Spleen (tissue), 13 donors: ENCODE measurements at regions of chr7 and their contacts with region 1.

Region 1: DNA sequence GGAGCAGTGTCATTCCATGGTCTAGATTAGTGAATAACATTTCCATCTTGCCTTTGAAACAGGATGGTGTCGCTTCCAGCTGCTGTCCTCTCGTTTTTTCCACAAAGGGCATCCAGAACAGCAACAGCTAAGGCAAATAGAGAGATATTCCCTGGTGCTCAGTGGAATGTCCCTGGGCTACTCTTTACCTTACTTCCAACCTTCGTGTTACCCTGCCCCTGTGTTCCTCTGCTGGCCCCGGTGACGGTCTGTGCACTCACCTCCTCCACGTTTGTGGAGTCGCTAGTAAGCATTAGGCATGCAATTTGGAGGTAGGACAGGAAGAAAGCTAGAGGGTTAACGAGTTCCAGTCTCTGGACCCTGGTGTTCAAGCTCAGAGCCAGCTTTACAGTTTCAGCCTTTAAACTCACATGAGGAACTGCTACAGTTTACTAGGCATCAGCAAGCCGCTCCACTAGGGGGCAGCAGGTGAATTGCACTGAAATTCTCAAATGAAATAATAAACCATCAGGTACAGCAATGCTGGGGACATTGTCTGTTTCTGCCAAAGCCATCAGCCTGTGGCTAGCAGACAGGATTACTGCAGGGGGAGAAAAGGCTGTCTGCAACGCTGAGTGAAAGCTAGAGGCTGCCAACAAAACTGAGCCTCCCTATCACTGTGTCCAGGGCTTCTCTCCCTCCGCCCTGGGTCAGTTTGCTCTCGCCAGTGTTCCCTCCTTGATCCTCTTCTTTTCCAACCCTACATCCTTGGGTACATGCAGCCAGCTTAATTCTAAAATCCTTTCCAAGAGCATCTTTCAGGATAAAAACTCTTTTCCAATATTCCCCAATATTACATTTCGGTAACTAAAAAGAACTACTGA is 9.0 kb downstream of the MRPL32 start:
- DNase-seq: peak; percentile 88
- H3K4me3 ChIP-seq: no peak overlapping the region
- H3K27ac ChIP-seq: no peak overlapping the region
- H3K4me1 ChIP-seq: peaks cover 0 to 17% (median 2%) of the 10 kb centered on the region in 6 donors
- H3K27me3 ChIP-seq: no peaks in the 10 kb centered on the region
- CTCF ChIP-seq: peak; percentile 53 to 89 (median 77)
- POLR2A ChIP-seq: no peak

Region 2: GRCh38 chr7:42590771-42591310 is 350.4 kb before region 1 on chr7:
- intact Hi-C with region 1: no loop called
- DNase-seq: no peak
- H3K4me3 ChIP-seq: no peak overlapping the region
- H3K27ac ChIP-seq: no peak overlapping the region
- H3K4me1 ChIP-seq: no peaks in the 10 kb centered on the region
- H3K27me3 ChIP-seq: no peaks in the 10 kb centered on the region
- CTCF ChIP-seq: no peak
- POLR2A ChIP-seq: no peak

Region 3: DNA sequence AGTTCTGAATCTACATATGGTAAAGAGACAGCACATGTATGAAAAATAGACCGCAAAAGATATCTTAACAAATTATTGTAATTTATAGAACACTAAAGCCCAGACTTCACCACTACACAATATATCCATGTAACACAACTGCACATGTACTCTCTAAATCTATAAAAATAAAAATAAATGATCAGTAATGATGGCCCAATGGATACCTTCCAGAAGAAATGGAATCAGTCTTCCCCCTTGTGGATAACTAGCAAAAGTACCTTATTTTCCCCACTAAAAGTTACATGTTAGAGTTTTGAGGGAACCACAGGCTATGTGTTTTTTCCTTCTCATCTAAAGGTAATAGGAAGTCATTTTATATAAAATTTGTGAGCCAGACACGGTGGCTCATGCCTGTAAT is 55.1 kb before region 1 on chr7:
- intact Hi-C with region 1: no loop called
- DNase-seq: no peak
- H3K4me3 ChIP-seq: no peak overlapping the region
- H3K27ac ChIP-seq: peak overlapping the region in 1 of 8 donors; percentile 91
- H3K4me1 ChIP-seq: peaks cover 0 to 50% (median 31%) of the 10 kb centered on the region in 6 donors
- H3K27me3 ChIP-seq: peaks cover 0 to 9% (median 0%) of the 10 kb centered on the region in 7 donors
- CTCF ChIP-seq: peak in 3 of 11 experiments; percentile 6 to 22 (median 19)
- POLR2A ChIP-seq: no peak

Region 4: DNA sequence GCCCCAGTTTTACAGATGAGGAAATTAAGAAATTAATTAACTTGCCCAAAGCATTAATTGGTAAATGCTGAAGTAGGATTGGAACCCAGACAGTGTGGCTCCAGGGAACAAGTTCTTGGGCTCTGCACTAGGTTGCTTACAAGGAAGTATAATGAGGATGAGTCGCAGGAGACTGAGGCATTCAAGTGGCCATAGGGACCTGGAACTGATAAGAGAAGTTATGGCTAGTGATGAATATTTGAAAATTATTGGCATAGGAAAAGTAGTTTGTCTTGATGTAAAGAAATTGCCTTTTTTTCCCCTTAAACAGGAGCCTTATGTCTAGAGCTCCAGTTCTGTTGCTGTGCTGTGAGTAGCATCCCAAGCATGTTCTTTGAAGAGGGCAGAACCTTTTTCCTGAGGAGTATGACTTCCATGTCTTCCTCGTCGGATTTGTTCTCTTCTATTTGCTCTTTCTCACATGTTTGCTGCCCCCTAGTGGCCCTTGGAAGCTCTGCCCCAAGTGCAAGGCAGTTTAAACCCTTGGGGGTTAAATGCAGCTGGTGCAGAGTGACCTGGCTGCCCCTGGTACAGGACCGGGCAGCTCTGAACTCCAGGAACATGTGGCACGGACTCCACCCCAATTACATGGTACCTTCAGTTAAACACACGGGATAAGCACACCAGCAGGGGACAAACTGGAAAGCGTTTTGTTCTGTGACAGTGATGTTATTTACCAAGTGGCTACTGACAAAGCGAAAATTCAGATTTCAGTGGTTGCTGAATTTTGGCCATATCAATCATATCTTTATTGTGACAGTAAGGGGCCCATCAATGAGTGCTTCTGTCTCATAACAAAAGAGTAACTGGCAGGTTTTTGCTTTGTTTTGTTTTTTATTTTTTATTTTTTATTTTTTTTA is 320.0 kb after region 1 on chr7:
- intact Hi-C with region 1: loop called (anchors 5 kb)
- DNase-seq: peak; percentile 83
- H3K4me3 ChIP-seq: no peak overlapping the region
- H3K27ac ChIP-seq: no peak overlapping the region
- H3K4me1 ChIP-seq: peaks cover 0 to 7% (median 0%) of the 10 kb centered on the region in 6 donors
- H3K27me3 ChIP-seq: peaks cover 0 to 17% (median 0%) of the 10 kb centered on the region in 7 donors
- CTCF ChIP-seq: peak; percentile 66 to 93 (median 82)
- POLR2A ChIP-seq: no peak

Region 5: DNA sequence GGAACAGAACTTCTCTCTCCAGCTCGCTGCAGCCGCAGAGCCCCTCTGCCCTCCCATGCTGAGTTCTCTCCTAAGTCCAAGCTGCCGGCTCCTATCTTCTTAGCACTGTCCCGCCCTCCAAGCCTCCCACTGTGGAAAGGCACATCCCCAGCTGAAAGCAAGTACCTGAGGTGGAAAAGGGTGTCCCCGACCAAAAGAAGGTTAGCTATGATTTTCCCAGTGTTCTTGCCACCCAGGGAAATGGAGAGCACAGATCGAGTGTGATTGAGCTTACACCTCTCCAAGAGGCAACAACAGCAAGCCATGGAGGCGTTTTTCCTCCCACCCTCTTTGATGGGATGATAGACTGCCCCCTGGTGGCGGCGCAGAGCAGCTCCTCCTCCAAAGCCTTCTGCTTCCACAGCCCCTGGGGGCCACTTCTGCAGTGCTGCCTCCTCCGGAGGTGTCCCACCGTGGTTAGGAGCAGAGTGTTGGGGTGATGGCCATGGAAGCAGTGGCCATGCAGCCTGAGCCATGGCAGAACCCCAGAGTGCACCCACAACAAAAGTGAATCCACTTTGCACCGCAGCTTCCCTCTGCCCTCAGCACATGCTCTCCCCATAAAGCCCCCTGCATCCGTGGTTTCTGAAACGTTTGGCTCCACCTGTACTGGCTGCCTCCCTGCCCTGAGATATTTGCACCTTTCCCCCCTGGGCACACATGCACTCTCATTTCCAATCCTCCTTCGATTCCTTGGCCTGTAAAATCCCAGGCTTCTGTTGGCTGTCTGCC is 498.6 kb after region 1 on chr7:
- intact Hi-C with region 1: loop called (anchors 10 kb)
- DNase-seq: peak; percentile 83
- H3K4me3 ChIP-seq: no peak overlapping the region
- H3K27ac ChIP-seq: no peak overlapping the region
- H3K4me1 ChIP-seq: no peaks in the 10 kb centered on the region
- H3K27me3 ChIP-seq: no peaks in the 10 kb centered on the region
- CTCF ChIP-seq: peak; percentile 4 to 82 (median 68)
- POLR2A ChIP-seq: no peak